ENCODE measurements at regions of chr3 and their contacts with region 1.

Region 1: GRCh38 chr3:194682694-194683310 is 2.9 kb upstream of the FAM43A start:
- DNase-seq: peak; percentile 89
- H3K4me3 Mint-ChIP-seq: peak overlapping the region; percentile 6
- H3K27ac Mint-ChIP-seq: no peak overlapping the region
- H3K4me1 Mint-ChIP-seq: peaks cover 29% of the 10 kb centered on the region
- H3K27me3 Mint-ChIP-seq: peaks cover 41% of the 10 kb centered on the region
- CTCF ChIP-seq: peak; percentile 96

Region 2: DNA sequence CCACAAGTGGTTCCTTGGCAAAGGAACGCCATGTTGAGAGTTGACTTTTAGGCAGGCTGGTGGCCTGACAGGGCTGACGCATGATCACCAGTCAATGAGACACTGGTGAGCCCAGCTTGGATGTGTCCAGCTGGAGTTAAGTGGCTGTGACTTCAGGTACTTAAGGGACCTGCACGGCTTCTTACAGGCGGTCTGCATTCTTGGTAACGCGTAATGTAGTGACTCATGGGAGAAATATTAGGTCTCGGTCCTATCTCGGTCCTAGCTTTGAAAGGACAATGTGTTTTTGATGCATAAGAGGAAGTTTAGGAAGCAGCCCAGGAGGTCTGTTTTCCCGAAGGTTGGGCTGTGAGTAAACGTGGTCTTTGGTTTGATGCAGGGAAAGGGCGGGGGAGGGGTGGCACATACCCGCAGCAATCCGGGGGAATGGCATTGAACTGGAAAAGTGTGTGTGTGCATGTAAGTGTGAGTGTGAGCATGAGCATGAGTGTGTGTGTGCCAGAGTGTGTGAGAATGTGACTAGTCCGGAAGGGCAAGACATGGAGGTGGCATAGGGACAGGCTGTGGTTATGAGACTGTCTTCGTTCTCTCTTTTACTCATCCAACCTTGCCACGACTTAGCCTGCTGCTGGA is 58.2 kb after region 1 on chr3:
- CTCF ChIA-PET with region 1: interaction called, 28 read pairs
- intact Hi-C with region 1: loop called (anchors 2 kb)
- DNase-seq: peak; percentile 81
- H3K4me3 Mint-ChIP-seq: peak overlapping the region; percentile 44
- H3K27ac Mint-ChIP-seq: peak overlapping the region; percentile 69
- H3K4me1 Mint-ChIP-seq: peaks cover 28% of the 10 kb centered on the region
- H3K27me3 Mint-ChIP-seq: no peaks in the 10 kb centered on the region
- CTCF ChIP-seq: no peak

Region 3: DNA sequence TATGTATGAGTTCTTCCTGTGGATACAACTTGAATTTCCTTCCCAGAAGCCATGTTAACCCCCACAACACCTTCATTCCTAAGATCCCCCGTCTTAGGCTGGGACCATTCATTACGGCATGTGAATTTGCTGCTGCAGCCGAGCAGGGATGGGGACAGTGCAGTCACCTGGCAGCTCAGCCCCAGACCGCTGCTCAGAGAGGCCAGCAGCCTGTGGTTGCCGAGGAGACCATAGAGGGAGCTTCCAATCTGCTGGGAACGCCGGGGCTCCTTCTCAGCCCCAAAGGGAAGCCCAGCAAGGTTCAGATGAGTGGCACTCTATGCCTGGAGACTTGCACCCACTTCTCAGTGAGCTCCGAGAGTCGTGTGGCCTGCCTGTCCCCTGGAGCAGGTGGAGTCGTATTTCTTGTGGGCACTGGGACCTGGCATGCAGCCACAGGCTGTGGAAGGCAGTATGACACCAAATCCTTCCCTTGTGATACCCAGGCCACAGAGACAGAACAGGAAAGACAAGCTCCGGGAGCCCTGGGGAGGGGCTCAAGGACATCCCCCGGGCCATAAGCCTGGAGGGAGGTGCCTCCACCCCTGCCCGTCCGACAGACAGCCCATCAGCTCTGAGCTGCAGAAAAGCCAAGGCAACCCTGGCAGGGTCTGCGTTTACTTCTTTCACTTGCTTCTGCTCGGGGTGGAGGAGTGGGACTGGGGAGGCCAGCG is 170.2 kb after region 1 on chr3:
- CTCF ChIA-PET with region 1: interaction called, 3 read pairs
- intact Hi-C with region 1: loop called (anchors 10 kb)
- DNase-seq: peak; percentile 48
- H3K4me3 Mint-ChIP-seq: no peak overlapping the region
- H3K27ac Mint-ChIP-seq: no peak overlapping the region
- H3K4me1 Mint-ChIP-seq: peaks cover 15% of the 10 kb centered on the region
- H3K27me3 Mint-ChIP-seq: peaks cover 23% of the 10 kb centered on the region
- CTCF ChIP-seq: no peak

Region 4: GRCh38 chr3:194906229-194906629 is 223.4 kb after region 1 on chr3:
- CTCF ChIA-PET with region 1: interaction called, 18 read pairs
- intact Hi-C with region 1: no loop called
- DNase-seq: peak; percentile 75
- H3K4me3 Mint-ChIP-seq: no peak overlapping the region
- H3K27ac Mint-ChIP-seq: peak overlapping the region; percentile 53
- H3K4me1 Mint-ChIP-seq: peaks cover 19% of the 10 kb centered on the region
- H3K27me3 Mint-ChIP-seq: peaks cover 36% of the 10 kb centered on the region
- CTCF ChIP-seq: no peak

Region 5: DNA sequence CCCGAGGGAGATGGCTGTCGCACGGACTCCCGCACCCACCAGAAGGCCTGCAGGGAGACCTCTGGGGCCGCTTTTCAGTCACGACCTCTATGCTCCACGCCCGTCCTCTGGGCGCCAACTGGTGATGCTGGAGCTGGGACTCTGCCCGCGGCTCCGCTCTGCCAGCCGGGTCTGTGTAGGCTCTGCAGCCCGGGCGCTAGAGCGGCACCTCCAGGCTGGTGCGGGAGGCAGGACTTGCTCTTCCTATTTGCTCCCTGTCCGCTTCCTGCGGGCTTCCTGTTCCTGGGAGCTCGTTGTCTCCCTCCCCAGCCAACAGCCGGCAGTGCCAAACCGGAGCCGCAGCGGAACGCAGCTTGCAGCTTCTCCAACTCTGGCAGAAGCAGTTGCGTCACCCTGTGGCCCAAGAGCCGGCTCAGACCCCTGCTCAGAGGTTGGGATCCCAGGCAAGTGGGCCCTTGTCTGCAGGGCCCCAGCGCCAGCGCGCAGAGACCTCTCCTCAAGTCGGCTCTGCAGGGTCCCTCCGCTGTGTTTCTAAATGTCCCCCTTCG is 302.3 kb after region 1 on chr3:
- CTCF ChIA-PET with region 1: interaction called, 20 read pairs
- intact Hi-C with region 1: no loop called
- DNase-seq: peak; percentile 57
- H3K4me3 Mint-ChIP-seq: peak overlapping the region; percentile 52
- H3K27ac Mint-ChIP-seq: no peak overlapping the region
- H3K4me1 Mint-ChIP-seq: peaks cover 28% of the 10 kb centered on the region
- H3K27me3 Mint-ChIP-seq: peaks cover 39% of the 10 kb centered on the region
- CTCF ChIP-seq: peak; percentile 13

Region 6: DNA sequence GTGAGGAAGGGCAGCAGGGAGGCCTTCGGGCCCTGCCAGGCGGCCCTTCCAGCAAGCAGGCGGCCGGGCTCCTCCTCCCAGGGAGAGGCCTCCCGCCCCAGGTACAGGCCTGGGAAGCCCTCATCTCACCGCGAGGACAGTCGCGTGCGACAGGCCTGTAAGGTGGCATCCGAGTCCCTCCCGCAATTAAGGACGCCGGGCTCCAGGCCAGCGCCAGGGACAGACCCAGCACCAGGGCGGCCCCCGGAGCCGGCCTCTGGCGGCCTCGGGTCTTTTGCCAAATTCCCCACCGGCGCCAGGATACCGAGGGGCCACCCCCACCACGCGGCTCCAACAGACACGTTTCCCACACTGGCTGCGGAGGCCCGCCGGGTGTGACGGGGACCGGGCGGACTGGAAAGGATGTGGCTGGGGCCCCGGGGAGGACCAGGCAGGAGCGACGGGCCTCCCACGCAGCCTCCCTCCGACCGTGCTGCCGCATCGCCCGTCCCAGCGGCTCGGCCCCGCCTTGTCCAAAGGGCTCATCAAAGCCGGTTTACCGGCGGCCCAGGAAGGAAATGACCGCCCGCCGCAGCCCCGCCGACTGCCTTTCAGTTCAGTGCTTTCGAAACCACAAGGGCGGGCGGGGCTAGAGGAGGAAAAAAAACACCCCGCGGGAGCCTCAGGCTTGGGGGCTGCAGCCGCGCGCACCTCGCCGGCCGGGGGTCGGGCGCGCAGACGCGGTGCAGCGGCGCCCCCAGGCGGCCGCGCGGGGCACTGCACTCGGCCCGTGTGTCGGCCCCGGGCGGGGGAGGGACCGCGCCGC is 576.9 kb after region 1 on chr3:
- CTCF ChIA-PET with region 1: interaction called, 10 read pairs
- intact Hi-C with region 1: loop called (anchors 2 kb)
- DNase-seq: peak; percentile 96
- H3K4me3 Mint-ChIP-seq: peak overlapping the region; percentile 77
- H3K27ac Mint-ChIP-seq: no peak overlapping the region
- H3K4me1 Mint-ChIP-seq: no peaks in the 10 kb centered on the region
- H3K27me3 Mint-ChIP-seq: no peaks in the 10 kb centered on the region
- CTCF ChIP-seq: peak; percentile 96

Region 7: DNA sequence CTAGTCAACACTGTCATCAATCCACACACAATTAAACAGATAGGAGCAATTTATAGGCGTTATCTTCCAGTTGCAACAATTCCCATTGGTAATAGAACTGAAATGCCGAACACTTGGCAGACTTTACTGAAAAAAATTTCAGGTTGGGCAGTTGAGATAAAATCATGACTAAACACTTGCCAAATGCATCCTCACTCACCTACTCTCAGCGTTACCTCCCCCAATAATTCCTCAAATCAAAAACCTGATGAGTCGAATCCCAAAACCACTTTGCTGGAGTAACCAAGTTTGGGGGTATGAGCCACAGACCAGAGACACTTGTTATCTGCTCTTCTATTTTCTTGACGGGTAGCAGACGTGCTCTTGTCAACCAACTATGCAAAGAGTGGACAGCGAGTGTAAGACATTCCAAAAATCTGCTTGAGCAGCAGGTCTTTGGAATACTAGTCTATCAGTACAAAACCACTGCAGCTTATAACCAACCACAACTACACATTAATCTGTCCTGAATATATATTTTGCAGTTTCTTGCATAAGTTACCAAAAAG is 830.1 kb after region 1 on chr3:
- CTCF ChIA-PET with region 1: no interaction called
- intact Hi-C with region 1: loop called (anchors 10 kb)
- DNase-seq: no peak
- H3K4me3 Mint-ChIP-seq: no peak overlapping the region
- H3K27ac Mint-ChIP-seq: no peak overlapping the region
- H3K4me1 Mint-ChIP-seq: no peaks in the 10 kb centered on the region
- H3K27me3 Mint-ChIP-seq: no peaks in the 10 kb centered on the region
- CTCF ChIP-seq: no peak

Measured in Calu3 (cell line).